ENCODE measurements at regions of chr9 and their contacts with region 1.

Region 1: GRCh38 chr9:28774416-28775235 is 1201.3 kb upstream of the C9orf72 start:
- DNase-seq: peak; percentile 33
- H3K4me3 ChIP-seq: no peak overlapping the region
- H3K27ac ChIP-seq: no peak overlapping the region
- H3K4me1 ChIP-seq: no peaks in the 10 kb centered on the region
- CTCF ChIP-seq: peak; percentile 86

Region 2: GRCh38 chr9:27726244-27727081 is 1048.2 kb before region 1 on chr9:
- CTCF ChIA-PET with region 1: no interaction called
- POLR2A ChIA-PET with region 1: no interaction called
- intact Hi-C with region 1: loop called (anchors 10 kb)
- DNase-seq: peak; percentile 53
- H3K4me3 ChIP-seq: no peak overlapping the region
- H3K27ac ChIP-seq: no peak overlapping the region
- H3K4me1 ChIP-seq: no peaks in the 10 kb centered on the region
- CTCF ChIP-seq: peak; percentile 83

Region 3: GRCh38 chr9:28583832-28584231 is 190.8 kb before region 1 on chr9:
- CTCF ChIA-PET with region 1: no interaction called
- POLR2A ChIA-PET with region 1: no interaction called
- intact Hi-C with region 1: no loop called
- DNase-seq: no peak
- H3K4me3 ChIP-seq: no peak overlapping the region
- H3K27ac ChIP-seq: no peak overlapping the region
- H3K4me1 ChIP-seq: no peaks in the 10 kb centered on the region
- CTCF ChIP-seq: no peak

Region 4: DNA sequence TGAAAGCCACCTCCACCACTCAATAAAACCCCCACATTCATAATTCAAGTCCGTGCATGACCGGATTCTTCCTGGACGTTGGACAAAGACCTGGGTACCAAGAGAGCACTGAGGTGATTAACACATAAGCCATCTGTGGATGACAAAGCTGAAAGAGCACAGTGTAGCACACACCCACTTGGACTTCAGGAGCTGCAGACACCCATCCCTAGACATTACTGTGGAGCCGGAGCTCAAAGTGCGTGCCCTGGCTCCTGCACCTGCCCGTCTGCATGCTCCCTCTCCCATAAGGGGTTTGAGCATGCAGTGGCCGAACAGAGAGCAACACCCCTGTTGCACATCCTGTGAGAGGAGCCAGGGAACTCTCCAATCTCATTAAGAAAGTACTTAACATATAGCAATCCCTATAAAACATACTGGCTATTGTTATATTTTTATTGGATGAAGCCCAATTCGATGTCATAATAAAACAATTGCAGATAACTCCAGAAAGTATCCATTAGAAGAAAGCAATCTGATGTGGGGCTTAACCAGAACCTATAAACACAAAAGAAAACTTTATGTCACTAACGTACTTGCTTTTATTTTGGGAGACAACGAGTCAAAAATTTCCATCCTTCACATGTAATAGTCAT is 27.2 kb before region 1 on chr9:
- CTCF ChIA-PET with region 1: no interaction called
- POLR2A ChIA-PET with region 1: no interaction called
- intact Hi-C with region 1: no loop called
- DNase-seq: no peak
- H3K4me3 ChIP-seq: no peak overlapping the region
- H3K27ac ChIP-seq: no peak overlapping the region
- H3K4me1 ChIP-seq: no peaks in the 10 kb centered on the region
- CTCF ChIP-seq: no peak

Region 5: GRCh38 chr9:28792736-28793135 is 18.1 kb after region 1 on chr9:
- CTCF ChIA-PET with region 1: no interaction called
- POLR2A ChIA-PET with region 1: no interaction called
- intact Hi-C with region 1: no loop called
- DNase-seq: no peak
- H3K4me3 ChIP-seq: no peak overlapping the region
- H3K27ac ChIP-seq: no peak overlapping the region
- H3K4me1 ChIP-seq: no peaks in the 10 kb centered on the region
- CTCF ChIP-seq: no peak

Region 6: DNA sequence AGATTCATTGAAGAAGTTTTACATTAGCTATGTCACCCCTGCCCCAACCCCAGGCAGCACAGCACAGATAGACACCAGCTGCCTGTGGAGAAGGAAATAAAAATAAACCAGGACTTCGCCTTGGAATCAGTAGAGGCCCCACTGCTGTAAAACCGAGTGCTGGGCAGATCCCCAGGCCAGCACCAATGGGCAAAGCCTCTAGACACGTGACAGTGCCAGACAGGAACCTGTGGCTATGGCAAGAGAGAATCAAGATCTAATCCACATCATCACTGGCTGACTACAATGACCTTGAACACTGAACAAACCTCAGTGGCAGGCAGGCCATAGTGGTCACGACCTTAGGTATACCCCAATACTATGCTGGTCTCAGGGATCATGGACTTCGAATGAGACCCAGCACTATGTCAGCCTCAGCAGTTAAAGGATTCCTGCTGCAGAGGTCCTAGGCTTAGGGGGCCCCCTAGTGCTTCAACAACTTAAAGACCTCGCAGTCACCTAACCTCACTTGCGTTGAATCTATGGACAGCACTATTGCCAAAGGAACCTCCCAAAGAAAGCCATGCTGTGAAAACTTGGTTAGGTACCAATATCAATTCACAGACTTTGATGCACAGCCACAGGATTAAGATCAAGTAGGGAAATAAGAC is 917.3 kb after region 1 on chr9:
- CTCF ChIA-PET with region 1: no interaction called
- POLR2A ChIA-PET with region 1: no interaction called
- intact Hi-C with region 1: loop called (anchors 10 kb)
- DNase-seq: peak; percentile 16
- H3K4me3 ChIP-seq: no peak overlapping the region
- H3K27ac ChIP-seq: no peak overlapping the region
- H3K4me1 ChIP-seq: no peaks in the 10 kb centered on the region
- CTCF ChIP-seq: peak; percentile 67